ENCODE measurements at regions of chrX and their contacts with region 1.

Region 1: DNA sequence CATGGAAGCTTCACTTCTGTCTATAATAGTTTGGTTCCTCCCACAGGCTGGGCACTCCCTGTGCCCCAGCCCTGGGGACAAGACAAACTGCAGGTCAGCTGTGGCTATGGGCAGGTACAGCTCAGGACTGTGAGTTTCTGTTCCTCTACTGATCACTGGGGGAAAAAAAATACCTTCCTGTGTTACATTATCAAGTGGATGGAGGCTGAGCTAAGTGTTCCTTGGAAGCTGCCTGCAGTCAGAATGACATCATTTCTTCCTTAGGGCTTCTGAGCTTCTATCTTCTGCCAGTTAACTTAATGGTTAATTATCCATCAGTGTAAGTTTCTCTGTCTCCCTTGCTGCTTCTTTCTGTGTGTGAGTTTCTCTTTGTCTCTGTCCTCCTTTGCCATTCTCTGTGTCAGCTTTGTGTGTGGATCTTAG is 4.6 kb downstream of the RAB33A start:
- DNase-seq: peak; percentile 44
- H3K4me3 ChIP-seq: no peak overlapping the region
- H3K27ac ChIP-seq: no peak overlapping the region
- H3K4me1 ChIP-seq: peaks cover 17% of the 10 kb centered on the region
- H3K27me3 ChIP-seq: no peaks in the 10 kb centered on the region

Region 2: DNA sequence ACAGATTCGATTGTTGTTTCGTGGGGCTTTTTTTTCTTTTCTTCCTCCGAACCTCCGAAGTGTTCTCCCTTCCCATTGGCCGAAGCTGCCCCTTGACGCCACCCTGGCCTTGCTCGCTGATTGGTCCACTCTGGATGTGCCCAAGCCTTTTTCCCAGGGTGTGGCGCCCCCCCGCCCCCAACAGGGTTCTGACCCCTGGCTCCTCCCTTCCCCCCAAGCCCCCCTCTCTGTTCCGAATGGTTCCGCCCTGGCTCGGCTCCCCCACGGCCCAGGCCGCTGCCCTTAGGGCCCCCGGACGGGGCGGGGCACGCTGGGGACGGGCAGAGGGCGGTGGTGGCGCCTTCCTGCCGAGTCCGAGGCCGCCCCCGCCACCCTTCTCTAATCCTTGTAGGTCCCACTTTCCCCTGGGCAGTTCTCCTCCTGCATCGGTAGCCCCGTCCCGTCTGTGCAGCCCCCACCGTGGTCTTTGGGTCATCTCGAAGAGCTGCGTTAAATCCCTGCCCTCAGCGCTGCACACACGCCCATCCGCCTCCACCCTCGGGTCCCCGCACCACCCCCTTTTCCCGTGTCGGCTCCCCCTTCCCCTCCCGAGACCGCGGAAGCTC is 244.9 kb before region 1 on chrX:
- in situ Hi-C with region 1: loop called (anchors 25 kb)
- DNase-seq: peak; percentile 92
- H3K4me3 ChIP-seq: peak overlapping the region; percentile 78
- H3K27ac ChIP-seq: peak overlapping the region; percentile 93
- H3K4me1 ChIP-seq: no peaks in the 10 kb centered on the region; the same call in 1 of the 2 replicates
- H3K27me3 ChIP-seq: no peaks in the 10 kb centered on the region

Measured in GM23248 (cell line).